B cell (primary cell): ENCODE measurements at regions of chr3 and their contacts with region 1.

Region 1: GRCh38 chr3:53303957-53304356 is 43.4 kb downstream of the DCP1A start:
- DNase-seq: no peak
- ATAC-seq: no peak
- H3K4me3 ChIP-seq: no peak overlapping the region
- H3K4me3 Mint-ChIP-seq: no peak overlapping the region
- H3K27ac ChIP-seq: no peak overlapping the region
- H3K27ac Mint-ChIP-seq: no peak overlapping the region
- H3K4me1 ChIP-seq: no peaks in the 10 kb centered on the region
- H3K4me1 Mint-ChIP-seq: peaks cover 4% of the 10 kb centered on the region
- H3K27me3 ChIP-seq: no peaks in the 10 kb centered on the region
- H3K27me3 Mint-ChIP-seq: no peaks in the 10 kb centered on the region
- CTCF ChIP-seq: no peak

Region 2: GRCh38 chr3:53114011-53114400 is 190.0 kb before region 1 on chr3:
- CTCF ChIA-PET with region 1: interaction called, 4 read pairs
- POLR2A ChIA-PET with region 1: no interaction called
- intact Hi-C with region 1: loop called (anchors 1 kb)
- DNase-seq: peak; percentile 86
- ATAC-seq: peak; percentile 84
- H3K4me3 ChIP-seq: no peak overlapping the region
- H3K4me3 Mint-ChIP-seq: no peak overlapping the region
- H3K27ac ChIP-seq: no peak overlapping the region
- H3K27ac Mint-ChIP-seq: no peak overlapping the region
- H3K4me1 ChIP-seq: no peaks in the 10 kb centered on the region
- H3K4me1 Mint-ChIP-seq: no peaks in the 10 kb centered on the region
- H3K27me3 ChIP-seq: no peaks in the 10 kb centered on the region
- H3K27me3 Mint-ChIP-seq: no peaks in the 10 kb centered on the region
- CTCF ChIP-seq: peak; percentile 90

Region 3: DNA sequence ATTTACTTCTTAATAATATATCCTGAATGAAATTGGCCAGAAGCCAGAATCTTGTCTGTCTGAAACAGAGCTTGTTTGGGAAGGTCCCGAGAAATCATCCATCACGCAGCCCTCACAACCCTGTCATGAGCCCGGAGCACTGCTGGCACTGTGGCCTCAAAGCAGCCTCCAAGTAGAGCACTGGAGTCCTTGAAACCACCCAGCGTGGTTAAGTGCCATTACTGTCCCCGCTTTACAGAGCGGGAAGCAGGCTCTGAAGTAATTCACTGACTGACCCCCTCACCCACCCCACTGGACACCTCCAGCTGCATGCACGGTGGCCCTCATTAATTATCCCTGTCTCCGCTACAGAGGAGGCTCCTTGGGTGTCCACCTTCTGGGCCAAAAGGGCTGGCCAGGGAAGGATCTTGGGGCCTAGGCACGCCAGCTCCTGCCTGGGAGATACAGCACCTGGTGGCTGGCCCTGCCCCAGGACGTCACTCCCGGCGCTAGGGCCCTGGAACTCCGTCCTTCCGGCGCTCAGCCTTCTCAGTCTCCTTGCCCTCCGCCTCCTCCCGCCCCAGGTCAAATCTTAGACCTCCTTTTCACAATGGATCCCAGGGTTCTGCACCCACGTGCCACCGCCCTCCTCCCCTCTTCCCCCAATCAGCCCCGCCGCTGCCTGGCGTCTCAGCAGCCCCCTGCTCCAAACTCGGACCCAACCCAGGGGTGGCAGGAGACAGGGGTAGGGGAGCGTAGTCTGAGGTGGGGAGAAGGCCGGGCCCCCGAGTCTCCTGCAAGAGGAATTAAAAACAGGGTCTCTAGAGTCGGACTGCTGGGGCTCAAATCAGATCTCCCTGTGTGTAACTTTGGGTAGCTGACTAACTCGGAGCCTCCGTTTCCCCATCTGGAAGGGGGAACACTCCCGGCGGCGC is 49.2 kb before region 1 on chr3:
- CTCF ChIA-PET with region 1: no interaction called
- POLR2A ChIA-PET with region 1: no interaction called
- intact Hi-C with region 1: no loop called
- DNase-seq: peak; percentile 55
- ATAC-seq: peak; percentile 13
- H3K4me3 ChIP-seq: peak overlapping the region; percentile 72 to 83 (median 75)
- H3K4me3 Mint-ChIP-seq: peak overlapping the region; percentile 91
- H3K27ac ChIP-seq: peak overlapping the region; percentile 41 to 63
- H3K27ac Mint-ChIP-seq: peak overlapping the region; percentile 81
- H3K4me1 ChIP-seq: peaks cover 37 to 54% of the 10 kb centered on the region in 2 donors
- H3K4me1 Mint-ChIP-seq: peaks cover 47% of the 10 kb centered on the region
- H3K27me3 ChIP-seq: no peaks in the 10 kb centered on the region
- H3K27me3 Mint-ChIP-seq: no peaks in the 10 kb centered on the region
- CTCF ChIP-seq: no peak

Region 4: DNA sequence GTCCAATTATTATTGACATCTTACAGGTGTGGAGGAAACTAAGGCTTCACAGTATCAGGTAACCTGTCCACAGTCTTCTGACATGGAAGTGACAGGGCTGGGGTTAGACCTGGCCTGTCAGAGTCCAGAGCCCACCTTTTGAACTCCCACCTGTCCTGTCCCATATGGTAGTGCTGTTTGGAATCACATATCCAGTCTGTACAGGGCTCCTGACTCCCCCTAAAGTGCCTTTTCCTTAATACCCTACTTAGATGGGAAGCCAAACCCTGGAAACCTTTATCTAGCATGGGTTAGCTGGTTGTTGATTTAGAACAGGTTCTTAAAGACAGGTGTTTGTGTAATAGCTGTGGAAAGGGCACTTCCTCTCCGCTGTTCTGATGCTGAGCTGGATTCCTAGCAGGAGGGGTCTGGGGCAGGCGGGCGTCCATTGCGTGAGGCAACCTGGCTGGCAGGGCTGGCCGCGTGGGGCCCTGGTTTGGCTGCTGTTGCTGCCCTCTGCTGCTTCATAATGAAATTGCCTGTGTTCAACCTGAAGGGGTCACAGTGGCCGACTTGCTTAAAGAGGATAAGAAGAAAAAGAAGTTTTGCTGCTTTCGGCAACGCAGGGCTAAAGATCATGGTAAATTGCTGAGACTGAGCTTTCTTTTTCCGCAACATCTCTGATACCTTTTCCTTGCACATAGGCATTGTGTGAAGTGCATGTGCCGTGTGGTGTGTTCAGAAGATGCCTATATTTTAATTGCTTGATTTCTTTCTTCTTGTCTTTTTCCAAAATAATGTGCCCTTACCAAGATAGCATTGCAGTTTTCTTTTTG is 406.1 kb after region 1 on chr3:
- CTCF ChIA-PET with region 1: interaction called, 10 read pairs
- POLR2A ChIA-PET with region 1: no interaction called
- intact Hi-C with region 1: no loop called
- DNase-seq: peak; percentile 72
- ATAC-seq: peak; percentile 63
- H3K4me3 ChIP-seq: no peak overlapping the region
- H3K4me3 Mint-ChIP-seq: no peak overlapping the region
- H3K27ac ChIP-seq: no peak overlapping the region
- H3K27ac Mint-ChIP-seq: no peak overlapping the region
- H3K4me1 ChIP-seq: peaks cover 0 to 10% of the 10 kb centered on the region in 2 donors
- H3K4me1 Mint-ChIP-seq: peaks cover 5% of the 10 kb centered on the region
- H3K27me3 ChIP-seq: peaks cover 0 to 10% (median 0%) of the 10 kb centered on the region in 4 experiments
- H3K27me3 Mint-ChIP-seq: no peaks in the 10 kb centered on the region
- CTCF ChIP-seq: peak; percentile 80